Activated naive CD4-positive, alpha-beta T cell treated with anti-CD3 and anti-CD28 coated beads for 36 hours (primary cell): ENCODE measurements at regions of chr10 and their contacts with region 1.

Region 1: GRCh38 chr10:70363971-70364771 is 18.3 kb downstream of the LRRC20 start:
- DNase-seq: peak; percentile 92
- H3K4me3 Mint-ChIP-seq: no peak overlapping the region
- H3K27ac Mint-ChIP-seq: no peak overlapping the region
- H3K4me1 Mint-ChIP-seq: peaks cover 10% of the 10 kb centered on the region
- H3K27me3 Mint-ChIP-seq: no peaks in the 10 kb centered on the region

Region 2: GRCh38 chr10:69527961-69528360 is 836.2 kb before region 1 on chr10:
- CTCF ChIA-PET with region 1: no interaction called
- intact Hi-C with region 1: no loop called
- DNase-seq: no peak
- H3K4me3 Mint-ChIP-seq: no peak overlapping the region
- H3K27ac Mint-ChIP-seq: no peak overlapping the region
- H3K4me1 Mint-ChIP-seq: no peaks in the 10 kb centered on the region
- H3K27me3 Mint-ChIP-seq: no peaks in the 10 kb centered on the region

Region 3: GRCh38 chr10:70093335-70093944 is 270.7 kb before region 1 on chr10:
- CTCF ChIA-PET with region 1: interaction called, 6 read pairs
- intact Hi-C with region 1: loop called (anchors 5 kb)
- DNase-seq: peak; percentile 52
- H3K4me3 Mint-ChIP-seq: peak overlapping the region; percentile 74
- H3K27ac Mint-ChIP-seq: peak overlapping the region; percentile 73
- H3K4me1 Mint-ChIP-seq: peaks cover 32% of the 10 kb centered on the region
- H3K27me3 Mint-ChIP-seq: no peaks in the 10 kb centered on the region

Region 4: GRCh38 chr10:70227548-70228320 is 136.4 kb before region 1 on chr10:
- CTCF ChIA-PET with region 1: interaction called, 100 read pairs
- intact Hi-C with region 1: no loop called
- DNase-seq: no peak
- H3K4me3 Mint-ChIP-seq: no peak overlapping the region
- H3K27ac Mint-ChIP-seq: no peak overlapping the region
- H3K4me1 Mint-ChIP-seq: peaks cover 58% of the 10 kb centered on the region
- H3K27me3 Mint-ChIP-seq: no peaks in the 10 kb centered on the region

Region 5: DNA sequence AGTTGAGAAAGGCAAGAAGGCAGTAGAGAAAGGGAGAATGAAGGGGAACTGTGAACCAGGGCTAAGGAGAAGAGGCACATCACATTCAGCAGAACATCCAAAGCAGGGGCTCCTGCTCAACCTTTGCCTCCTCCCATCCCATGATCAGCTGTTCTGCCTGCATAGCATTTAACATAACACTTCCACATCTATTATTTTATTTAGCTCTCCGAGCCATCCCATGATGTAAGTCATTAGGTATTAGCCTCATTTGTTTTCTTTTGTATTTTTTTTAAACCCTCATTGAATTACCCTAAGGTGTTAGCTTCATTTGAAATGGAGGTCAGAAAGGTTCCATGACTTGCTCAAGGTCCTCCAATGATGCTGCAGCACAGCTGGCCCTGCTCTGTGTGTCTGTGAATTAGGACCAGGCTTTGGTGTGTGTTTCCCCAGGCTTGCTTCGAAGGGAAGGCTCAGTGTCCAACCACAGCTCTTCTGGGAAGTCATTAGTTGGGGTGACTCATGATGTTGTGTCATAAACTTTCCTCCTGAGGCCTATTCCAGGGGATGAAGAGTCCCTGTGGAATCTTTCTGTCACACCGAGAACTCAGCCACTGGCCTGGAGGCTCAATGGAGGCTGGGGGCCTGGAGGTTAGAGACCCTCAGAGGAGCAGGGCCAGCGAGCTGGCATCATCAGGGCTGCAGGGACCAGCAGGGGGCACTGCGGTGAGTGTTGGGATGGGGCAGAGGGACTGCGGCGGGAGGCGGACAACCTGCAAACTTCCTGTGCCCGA is 96.8 kb before region 1 on chr10:
- CTCF ChIA-PET with region 1: interaction called, 20 read pairs
- intact Hi-C with region 1: no loop called
- DNase-seq: peak; percentile 14
- H3K4me3 Mint-ChIP-seq: no peak overlapping the region
- H3K27ac Mint-ChIP-seq: no peak overlapping the region
- H3K4me1 Mint-ChIP-seq: peaks cover 20% of the 10 kb centered on the region
- H3K27me3 Mint-ChIP-seq: peaks cover 2% of the 10 kb centered on the region

Region 6: DNA sequence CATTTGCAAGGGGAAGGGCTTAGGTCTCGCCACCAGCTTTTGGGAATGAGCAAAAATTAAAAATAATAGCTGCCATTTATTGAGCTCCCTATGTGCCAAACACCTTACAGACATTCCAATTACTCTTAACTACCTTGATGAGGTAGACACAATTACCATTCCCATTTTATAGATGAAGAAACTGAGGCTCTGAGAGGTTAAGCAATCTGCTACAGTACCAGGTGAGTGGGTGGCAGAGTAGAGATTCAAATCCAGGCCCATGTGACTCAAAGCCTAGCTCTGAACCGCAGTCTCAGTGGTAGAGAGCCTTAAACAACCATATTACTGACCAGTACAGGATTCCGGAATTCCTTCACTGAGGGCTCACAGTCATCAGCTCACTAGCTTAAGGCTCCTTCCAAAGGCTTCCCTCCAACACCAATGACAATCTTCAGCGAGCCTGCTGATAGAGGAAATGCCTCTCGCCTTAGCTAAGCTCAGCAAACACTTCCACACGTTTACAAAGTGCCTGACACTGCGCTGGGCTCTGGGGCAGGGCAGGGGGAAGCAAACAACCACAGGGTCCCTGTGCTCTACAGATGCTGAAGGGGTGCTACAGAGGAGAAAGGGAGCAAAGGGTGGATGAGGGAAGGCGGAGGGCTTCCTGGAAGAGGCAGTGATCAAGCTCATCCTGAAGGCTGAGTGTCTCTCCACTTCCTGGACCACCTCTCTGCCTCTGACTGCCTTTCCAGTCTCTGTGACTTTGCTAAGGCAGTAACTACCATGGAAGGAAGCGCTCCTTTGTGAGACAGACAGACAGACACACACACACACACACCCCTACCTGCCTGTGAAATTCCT is 10.8 kb after region 1 on chr10:
- CTCF ChIA-PET with region 1: interaction called, 10 read pairs
- intact Hi-C with region 1: no loop called
- DNase-seq: no peak
- H3K4me3 Mint-ChIP-seq: no peak overlapping the region
- H3K27ac Mint-ChIP-seq: no peak overlapping the region
- H3K4me1 Mint-ChIP-seq: no peaks in the 10 kb centered on the region
- H3K27me3 Mint-ChIP-seq: peaks cover 2% of the 10 kb centered on the region